CD8-positive, alpha-beta T cell (primary cell): ENCODE measurements at regions of chr17 and their contacts with region 1.

Region 1: DNA sequence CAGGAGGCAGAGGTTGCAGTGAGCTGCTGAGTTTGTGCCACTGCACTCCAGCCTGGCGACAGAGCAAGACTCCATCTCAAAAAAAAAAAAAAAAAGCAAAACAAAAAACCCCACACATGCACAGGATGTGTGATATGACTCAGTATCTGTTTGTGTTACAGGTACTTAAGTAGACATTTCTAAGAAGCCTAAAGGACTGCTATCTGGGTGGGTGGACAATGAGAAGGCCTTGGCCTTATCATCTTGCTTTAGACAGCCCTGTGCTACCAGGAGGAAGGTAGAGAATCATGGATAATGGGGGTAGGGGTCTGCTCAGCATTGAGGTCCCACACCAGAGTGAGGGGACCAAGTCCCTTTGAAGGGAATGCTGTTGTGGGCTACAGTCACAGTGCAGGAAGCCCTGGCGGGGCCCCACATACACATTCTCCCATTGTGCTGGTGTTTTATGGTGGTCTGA is 26.7 kb downstream of the PLD6 start:
- DNase-seq: peak in 4 of 9 experiments; percentile 35 to 74 (median 57)
- ATAC-seq: peak; percentile 65
- H3K4me3 ChIP-seq: peak overlapping the region in 1 of 2 experiments; percentile 7
- H3K4me3 Mint-ChIP-seq: peak overlapping the region; percentile 71
- H3K27ac ChIP-seq: peak overlapping the region; percentile 26 to 41
- H3K27ac Mint-ChIP-seq: peak overlapping the region; percentile 97
- H3K4me1 ChIP-seq: peaks cover 94% of the 10 kb centered on the region
- H3K4me1 Mint-ChIP-seq: peaks cover 84% of the 10 kb centered on the region
- H3K27me3 ChIP-seq: no peaks in the 10 kb centered on the region
- H3K27me3 Mint-ChIP-seq: no peaks in the 10 kb centered on the region
- CTCF ChIP-seq: no peak

Region 2: DNA sequence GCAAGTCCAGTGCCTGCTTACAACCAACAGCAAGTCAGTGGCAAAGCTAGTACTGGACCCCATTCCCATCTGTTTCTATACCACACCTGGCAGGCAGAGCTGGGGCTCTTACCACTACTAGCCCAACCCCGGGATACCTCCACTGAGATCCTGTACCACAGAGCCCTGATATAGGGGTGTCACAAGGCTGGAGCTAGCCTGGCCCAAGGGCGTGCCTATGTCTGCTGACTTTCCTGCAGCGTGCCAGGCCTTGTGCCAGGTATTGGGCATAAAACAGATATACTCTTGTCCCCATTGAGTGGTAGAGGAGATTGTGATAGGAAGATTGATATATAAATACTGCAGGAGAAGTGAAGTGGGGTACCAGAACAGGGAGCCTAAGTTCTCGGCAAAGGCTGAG is 17.6 kb before region 1 on chr17:
- CTCF ChIA-PET with region 1: interaction called, 9 read pairs
- POLR2A ChIA-PET with region 1: interaction called, 6 read pairs
- intact Hi-C with region 1: loop called in 1 of 2 experiments (anchors 1 kb)
- DNase-seq: no peak
- ATAC-seq: no peak
- H3K4me3 ChIP-seq: no peak overlapping the region
- H3K4me3 Mint-ChIP-seq: no peak overlapping the region
- H3K27ac ChIP-seq: no peak overlapping the region
- H3K27ac Mint-ChIP-seq: no peak overlapping the region
- H3K4me1 ChIP-seq: no peaks in the 10 kb centered on the region
- H3K4me1 Mint-ChIP-seq: no peaks in the 10 kb centered on the region
- H3K27me3 ChIP-seq: no peaks in the 10 kb centered on the region
- H3K27me3 Mint-ChIP-seq: no peaks in the 10 kb centered on the region
- CTCF ChIP-seq: no peak

Region 3: GRCh38 chr17:17206124-17206912 is 26.9 kb after region 1 on chr17 and contains the start of gene PLD6:
- CTCF ChIA-PET with region 1: interaction called, 4 read pairs
- POLR2A ChIA-PET with region 1: interaction called, 4 read pairs
- intact Hi-C with region 1: loop called (anchors 1 kb)
- DNase-seq: peak; percentile 72 to 96 (median 94)
- ATAC-seq: peak; percentile 79
- H3K4me3 ChIP-seq: peak within 1 kb of the TSS; percentile 48 to 75
- H3K4me3 Mint-ChIP-seq: peak within 1 kb of the TSS; percentile 86
- H3K27ac ChIP-seq: peak within 1 kb of the TSS; percentile 41 to 59
- H3K27ac Mint-ChIP-seq: peak within 1 kb of the TSS; percentile 92
- H3K4me1 ChIP-seq: peaks cover 21% of the 10 kb centered on the region
- H3K4me1 Mint-ChIP-seq: peaks cover 29% of the 10 kb centered on the region
- H3K27me3 ChIP-seq: no peaks in the 10 kb centered on the region
- H3K27me3 Mint-ChIP-seq: no peaks in the 10 kb centered on the region
- CTCF ChIP-seq: no peak
- total RNA-seq, gene PLD6: 3.2 to 3.3 TPM